Activated T-helper 1 cell treated with anti-CD3 and anti-CD28 coated beads, Interleukin-12 subunit alpha, Interleukin-12 subunit beta, Interleukin-2, Interleukin-4 antibody, amounts not matched to agents 30 ng/mL and 10 ng/mL and 1 ng/mL, durations not matched to agents 14 hours and 24 hours and 36 hours (primary cell): ENCODE measurements at regions of chr9 and their contacts with region 1.

Region 1: GRCh38 chr9:76023715-76024195 is 133.3 kb downstream of the PCSK5 start:
- DNase-seq: peak; percentile 35
- H3K4me3 Mint-ChIP-seq: peak overlapping the region; percentile 75
- H3K27ac Mint-ChIP-seq: peak overlapping the region; percentile 77
- H3K4me1 Mint-ChIP-seq: peaks cover 87% of the 10 kb centered on the region
- H3K27me3 Mint-ChIP-seq: no peaks in the 10 kb centered on the region

Region 2: DNA sequence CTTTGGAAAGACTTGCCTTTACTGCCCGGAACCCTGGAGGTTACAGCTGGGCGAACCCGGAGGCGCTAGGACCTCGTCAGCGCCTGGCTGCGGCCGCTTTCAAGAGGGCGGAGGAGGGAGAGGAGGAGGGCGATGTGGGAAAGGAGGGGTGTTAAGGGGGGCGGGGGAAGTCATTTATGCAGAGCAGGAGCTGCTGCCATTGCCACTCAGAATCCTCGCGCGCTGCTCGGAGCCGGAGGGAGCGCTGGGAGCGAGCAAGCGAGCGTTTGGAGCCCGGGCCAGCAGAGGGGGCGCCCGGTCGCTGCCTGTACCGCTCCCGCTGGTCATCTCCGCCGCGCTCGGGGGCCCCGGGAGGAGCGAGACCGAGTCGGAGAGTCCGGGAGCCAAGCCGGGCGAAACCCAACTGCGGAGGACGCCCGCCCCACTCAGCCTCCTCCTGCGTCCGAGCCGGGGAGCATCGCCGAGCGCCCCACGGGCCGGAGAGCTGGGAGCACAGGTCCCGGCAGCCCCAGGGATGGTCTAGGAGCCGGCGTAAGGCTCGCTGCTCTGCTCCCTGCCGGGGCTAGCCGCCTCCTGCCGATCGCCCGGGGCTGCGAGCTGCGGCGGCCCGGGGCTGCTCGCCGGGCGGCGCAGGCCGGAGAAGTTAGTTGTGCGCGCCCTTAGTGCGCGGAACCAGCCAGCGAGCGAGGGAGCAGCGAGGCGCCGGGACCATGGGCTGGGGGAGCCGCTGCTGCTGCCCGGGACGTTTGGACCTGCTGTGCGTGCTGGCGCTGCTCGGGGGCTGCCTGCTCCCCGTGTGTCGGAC is 133.1 kb before region 1 on chr9 and contains the start of gene PCSK5:
- intact Hi-C with region 1: loop called (anchors 2 kb)
- DNase-seq: peak; percentile 81
- H3K4me3 Mint-ChIP-seq: peak within 1 kb of the TSS; percentile 91
- H3K27ac Mint-ChIP-seq: peak within 1 kb of the TSS; percentile 76
- H3K4me1 Mint-ChIP-seq: peaks cover 35% of the 10 kb centered on the region
- H3K27me3 Mint-ChIP-seq: peaks cover 37% of the 10 kb centered on the region
- total RNA-seq, gene PCSK5: 3.3 and 3.7 TPM in 2 replicates

Region 3: DNA sequence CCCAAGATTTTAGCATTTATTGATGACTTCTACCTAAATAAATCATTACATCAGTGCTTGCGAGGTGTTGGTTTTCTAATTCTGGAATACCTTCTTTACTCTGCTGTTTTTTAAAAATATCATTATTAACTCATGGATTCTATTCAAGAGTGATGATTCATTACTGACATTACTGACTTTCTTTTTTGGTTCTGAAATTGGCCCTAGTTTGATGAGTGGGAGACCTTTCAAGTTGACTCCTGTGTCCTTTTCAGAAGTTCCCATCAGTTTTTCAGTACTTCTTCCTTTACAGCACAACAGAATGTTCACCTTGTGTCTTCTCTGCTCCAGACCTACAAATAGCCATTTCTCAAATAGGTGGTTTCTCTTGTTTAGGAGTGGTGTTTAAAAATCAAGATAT is 19.2 kb before region 1 on chr9:
- intact Hi-C with region 1: loop called (anchors 1 kb)
- DNase-seq: no peak
- H3K4me3 Mint-ChIP-seq: no peak overlapping the region
- H3K27ac Mint-ChIP-seq: no peak overlapping the region
- H3K4me1 Mint-ChIP-seq: peaks cover 21% of the 10 kb centered on the region
- H3K27me3 Mint-ChIP-seq: no peaks in the 10 kb centered on the region

Region 4: DNA sequence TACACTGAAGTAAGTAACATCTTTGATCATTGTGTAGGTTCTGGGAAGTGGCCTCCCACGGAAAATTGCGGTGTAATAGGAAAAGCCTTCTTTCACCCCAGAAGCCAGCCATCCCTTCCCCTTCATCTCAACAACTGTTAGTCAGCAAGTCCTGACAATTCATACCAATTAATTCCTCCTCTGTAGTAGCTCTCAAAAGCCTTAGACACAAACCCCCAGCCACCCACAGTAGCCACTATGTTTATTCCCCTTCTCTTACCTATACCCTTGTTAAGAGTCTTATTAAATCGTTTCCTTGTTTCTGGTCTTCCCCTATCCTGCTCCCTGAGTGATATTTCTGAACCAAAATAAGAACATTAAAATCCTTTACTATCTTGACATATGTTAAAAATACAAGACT is 10.3 kb after region 1 on chr9:
- intact Hi-C with region 1: loop called (anchors 1 kb)
- DNase-seq: no peak
- H3K4me3 Mint-ChIP-seq: no peak overlapping the region
- H3K27ac Mint-ChIP-seq: no peak overlapping the region
- H3K4me1 Mint-ChIP-seq: peaks cover 24% of the 10 kb centered on the region
- H3K27me3 Mint-ChIP-seq: no peaks in the 10 kb centered on the region

Region 5: DNA sequence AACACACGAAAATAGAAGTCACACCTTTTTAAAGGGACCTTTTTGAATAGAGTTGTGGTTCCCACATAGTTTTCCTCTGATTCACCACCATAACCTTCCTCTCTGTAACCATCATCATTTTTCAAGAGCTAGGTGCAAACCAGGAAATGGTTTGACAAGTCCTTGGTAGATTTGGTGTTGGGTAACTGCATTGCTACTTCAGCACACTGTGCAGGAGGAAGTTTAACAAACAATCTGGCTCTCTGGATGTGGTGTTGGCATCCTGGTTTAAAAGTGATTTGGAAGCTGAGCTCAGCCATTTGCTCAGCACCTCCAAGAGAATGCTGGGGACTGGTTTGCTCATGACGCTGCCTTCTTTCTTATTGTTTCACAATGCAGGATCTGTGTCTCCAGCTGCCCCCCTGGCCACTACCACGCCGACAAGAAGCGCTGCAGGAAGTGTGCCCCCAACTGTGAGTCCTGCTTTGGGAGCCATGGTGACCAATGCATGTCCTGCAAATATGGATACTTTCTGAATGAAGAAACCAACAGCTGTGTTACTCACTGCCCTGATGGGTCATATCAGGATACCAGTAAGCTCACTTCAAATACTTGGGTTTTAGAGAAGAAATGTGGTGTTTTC is 157.4 kb after region 1 on chr9:
- intact Hi-C with region 1: loop called (anchors 2 kb)
- DNase-seq: peak; percentile 9
- H3K4me3 Mint-ChIP-seq: no peak overlapping the region
- H3K27ac Mint-ChIP-seq: peak overlapping the region; percentile 65
- H3K4me1 Mint-ChIP-seq: peaks cover 57% of the 10 kb centered on the region
- H3K27me3 Mint-ChIP-seq: no peaks in the 10 kb centered on the region

Region 6: DNA sequence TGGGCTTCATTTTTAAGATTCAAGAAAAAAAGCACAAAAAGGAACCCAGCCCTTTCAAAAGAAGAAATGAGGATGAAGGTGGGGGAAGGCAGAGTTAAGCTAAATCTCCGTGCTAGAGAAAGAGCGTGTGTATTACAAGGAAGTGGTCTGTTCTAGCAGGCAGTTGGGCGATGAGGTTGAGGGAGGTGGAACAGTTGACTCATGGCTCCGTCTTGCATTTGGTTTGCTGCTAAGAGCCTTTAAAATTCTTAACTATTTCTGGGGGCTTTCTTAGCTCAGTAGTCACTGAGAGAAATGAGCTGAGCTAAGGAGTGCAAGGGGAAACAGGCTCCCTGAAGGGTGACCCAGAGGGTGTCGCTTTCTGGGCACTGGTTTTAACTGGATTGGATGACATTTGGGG is 552.6 kb after region 1 on chr9:
- intact Hi-C with region 1: loop called (anchors 10 kb)
- DNase-seq: peak; percentile 59
- H3K4me3 Mint-ChIP-seq: peak overlapping the region; percentile 25
- H3K27ac Mint-ChIP-seq: peak overlapping the region; percentile 89
- H3K4me1 Mint-ChIP-seq: peaks cover 34% of the 10 kb centered on the region
- H3K27me3 Mint-ChIP-seq: peaks cover 1% of the 10 kb centered on the region